K562 (cell line): ENCODE measurements at regions of chr1 and their contacts with region 1.

Region 1: GRCh38 chr1:174883409-174883808 is 116.3 kb upstream of the CACYBP start:
- DNase-seq: peak in 2 of 4 experiments; percentile 32 to 52
- ATAC-seq: peak; percentile 81
- H3K4me3 ChIP-seq: no peak overlapping the region
- H3K27ac ChIP-seq: no peak overlapping the region
- H3K4me1 ChIP-seq: peaks cover 6 to 13% of the 10 kb centered on the region in 2 experiments; a peak in 3 of 5 replicates
- H3K27me3 ChIP-seq: no peaks in the 10 kb centered on the region
- CTCF ChIP-seq: peak; percentile 34 to 66 (median 36); a peak in 3 of 6 replicates
- EP300 ChIP-seq: no peak
- POLR2A ChIP-seq: no peak
- RAD21 ChIP-seq: peak; percentile 63 to 75

Region 2: DNA sequence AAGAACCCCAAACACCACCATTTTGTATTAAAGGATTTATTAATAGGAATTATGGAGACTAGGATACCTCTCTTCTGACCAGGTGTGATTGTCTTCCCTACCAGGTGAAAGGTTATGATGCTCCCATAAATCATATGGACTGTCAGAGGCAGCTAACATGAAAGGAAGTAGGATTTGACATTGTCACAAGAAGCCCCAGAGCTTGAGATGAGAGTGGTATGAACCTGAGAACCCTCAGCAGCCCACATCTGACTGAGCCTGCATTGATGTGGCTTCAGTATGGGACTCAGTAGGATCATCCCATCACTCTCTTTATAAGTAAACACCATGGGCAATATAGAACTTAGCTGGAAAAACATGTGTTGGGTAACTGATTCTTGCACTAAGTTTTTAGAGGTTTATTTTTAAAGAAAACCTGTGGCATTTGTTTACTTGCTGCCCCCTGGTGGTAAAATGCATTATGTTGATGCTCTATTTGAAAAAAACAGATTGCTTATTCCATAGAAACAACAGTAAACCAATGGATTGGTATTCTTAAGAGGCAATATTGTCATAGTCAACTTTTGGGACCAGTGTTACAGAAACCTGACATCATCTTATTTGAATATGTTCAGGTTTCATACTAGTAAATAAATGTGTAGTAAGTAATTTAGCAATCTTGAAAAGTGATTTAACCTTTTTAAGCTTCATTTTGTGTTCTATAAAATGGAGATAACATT is 99.7 kb after region 1 on chr1:
- CTCF ChIA-PET with region 1: no interaction called
- POLR2A ChIA-PET with region 1: no interaction called
- in situ Hi-C with region 1: loop called (anchors 10 kb)
- intact Hi-C with region 1: loop called (anchors 1 kb)
- DNase-seq: peak; percentile 43 to 74 (median 48)
- ATAC-seq: peak; percentile 43; the same call in 2 of the 3 replicates
- H3K4me3 ChIP-seq: no peak overlapping the region
- H3K27ac ChIP-seq: no peak overlapping the region
- H3K4me1 ChIP-seq: no peaks in the 10 kb centered on the region
- H3K27me3 ChIP-seq: no peaks in the 10 kb centered on the region
- CTCF ChIP-seq: peak; percentile 48 to 82 (median 68); a peak in 4 of 6 replicates
- EP300 ChIP-seq: no peak
- POLR2A ChIP-seq: no peak
- RAD21 ChIP-seq: peak; percentile 75 to 91

Region 3: GRCh38 chr1:175043824-175044223 is 160.4 kb after region 1 on chr1:
- CTCF ChIA-PET with region 1: no interaction called
- POLR2A ChIA-PET with region 1: no interaction called
- in situ Hi-C with region 1: no loop called
- intact Hi-C with region 1: no loop called
- DNase-seq: no peak
- ATAC-seq: no peak; the same call in 2 of the 3 replicates
- H3K4me3 ChIP-seq: no peak overlapping the region
- H3K27ac ChIP-seq: no peak overlapping the region
- H3K4me1 ChIP-seq: peaks cover 0 to 11% of the 10 kb centered on the region in 2 experiments; a peak in 1 of 5 replicates
- H3K27me3 ChIP-seq: peaks cover 41 to 56% of the 10 kb centered on the region in 2 experiments
- CTCF ChIP-seq: no peak
- EP300 ChIP-seq: no peak
- POLR2A ChIP-seq: no peak
- RAD21 ChIP-seq: no peak